Psoas muscle (tissue), 8 donors: ENCODE measurements at regions of chr1 and their contacts with region 1.

Region 1: DNA sequence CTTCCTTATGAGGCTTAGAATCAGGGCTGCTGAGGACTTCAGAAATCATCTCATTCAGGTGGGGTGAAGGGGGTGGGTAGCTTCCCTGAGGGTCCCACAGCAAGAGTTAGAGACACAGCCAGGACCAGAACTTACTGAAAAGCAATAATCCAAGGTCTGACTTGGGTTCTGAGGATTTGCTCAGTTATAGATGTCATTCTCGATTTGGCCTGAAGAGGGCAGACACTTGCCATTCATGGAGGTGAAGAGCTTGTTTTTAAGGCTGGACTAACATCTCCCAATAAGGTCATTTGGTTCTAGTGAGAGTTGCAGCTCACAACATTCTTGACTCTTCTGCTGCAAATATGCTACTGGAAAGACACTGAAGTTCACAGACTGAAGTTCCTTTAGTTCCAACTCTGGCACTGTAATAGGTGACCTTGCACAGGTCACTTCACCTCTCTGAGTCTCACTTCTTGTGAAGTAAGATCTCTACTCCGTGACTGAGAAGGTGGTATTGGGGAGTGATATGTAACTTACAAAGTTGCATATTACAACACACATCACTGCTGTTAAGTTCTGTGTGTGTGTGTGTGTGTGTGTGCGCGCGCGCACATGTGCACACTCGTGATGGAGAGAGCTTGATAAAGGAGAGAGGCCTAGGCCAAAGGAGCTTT is 69.8 kb upstream of the DIRAS3 start:
- DNase-seq: no peak
- ATAC-seq: peak; percentile 69 to 87 (median 79)
- H3K4me3 ChIP-seq: no peak overlapping the region
- H3K27ac ChIP-seq: no peak overlapping the region
- H3K4me1 ChIP-seq: peaks cover 3% of the 10 kb centered on the region
- H3K27me3 ChIP-seq: no peaks in the 10 kb centered on the region
- CTCF ChIP-seq: peak; percentile 94

Region 2: DNA sequence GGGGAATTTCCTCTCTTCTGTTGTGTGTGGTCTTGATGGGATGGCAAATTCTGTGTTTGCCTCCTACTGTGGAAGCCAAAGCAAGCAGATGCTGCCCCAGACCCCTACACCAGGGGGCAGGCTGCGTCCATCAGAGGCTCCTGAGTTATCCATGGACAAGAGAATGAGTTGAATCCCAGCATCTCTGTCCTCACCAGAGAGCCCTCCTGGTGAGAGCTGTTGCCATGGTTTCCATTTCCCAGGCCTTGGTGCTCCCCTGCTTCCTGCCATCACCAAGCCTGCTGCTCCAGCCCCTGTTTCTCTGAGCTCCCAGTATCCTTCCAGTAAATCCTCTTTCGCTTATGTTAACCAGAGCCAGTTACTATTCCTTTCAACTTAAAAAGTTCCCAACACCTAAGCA is 266.6 kb before region 1 on chr1:
- intact Hi-C with region 1: loop called in 1 of 2 experiments (anchors 10 kb)
- DNase-seq: peak; percentile 27 to 50
- ATAC-seq: peak in 2 of 4 donors; percentile 31 to 48
- H3K4me3 ChIP-seq: no peak overlapping the region
- H3K27ac ChIP-seq: no peak overlapping the region
- H3K4me1 ChIP-seq: peaks cover 7% of the 10 kb centered on the region
- H3K27me3 ChIP-seq: peaks cover 0 to 1% (median 0%) of the 10 kb centered on the region in 3 donors
- CTCF ChIP-seq: peak; percentile 56

Region 3: DNA sequence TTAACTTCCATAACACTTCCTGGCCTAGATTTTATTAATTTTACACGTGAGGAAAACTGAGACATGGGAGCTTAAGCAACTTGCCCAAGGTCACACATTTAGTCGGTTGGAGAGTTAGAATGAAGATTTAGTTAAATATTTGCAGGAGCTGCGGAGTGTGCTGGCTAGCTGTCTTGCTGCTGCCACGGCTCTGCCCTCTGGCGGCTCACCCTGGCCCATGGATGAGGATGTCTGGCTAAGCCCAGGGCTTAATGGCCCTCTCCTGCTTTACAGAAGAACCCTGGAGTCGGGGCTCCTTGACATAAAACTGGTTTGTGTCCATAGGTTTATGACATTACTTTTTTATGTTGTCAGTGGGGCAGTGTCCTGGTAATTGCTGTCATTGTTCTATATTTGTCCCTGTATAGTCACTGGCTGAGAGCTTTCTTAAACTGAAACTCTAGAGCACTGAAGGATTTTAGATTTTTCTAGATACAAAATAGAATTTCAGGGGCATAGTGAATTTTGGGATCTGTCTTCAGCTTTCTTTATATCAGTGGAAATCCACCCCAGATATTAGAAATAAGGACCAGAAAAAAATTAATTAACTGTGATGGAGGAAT is 200.9 kb after region 1 on chr1:
- intact Hi-C with region 1: loop called (anchors 1 to 5 kb)
- DNase-seq: peak; percentile 44 to 72
- ATAC-seq: peak; percentile 76 to 96 (median 86)
- H3K4me3 ChIP-seq: no peak overlapping the region
- H3K27ac ChIP-seq: no peak overlapping the region
- H3K4me1 ChIP-seq: no peaks in the 10 kb centered on the region
- H3K27me3 ChIP-seq: no peaks in the 10 kb centered on the region
- CTCF ChIP-seq: peak; percentile 70

Region 4: GRCh38 chr1:68384321-68384813 is 264.1 kb after region 1 on chr1:
- intact Hi-C with region 1: loop called in 1 of 2 experiments (anchors 1 kb)
- DNase-seq: no peak
- ATAC-seq: peak; percentile 91 to 98 (median 98)
- H3K4me3 ChIP-seq: no peak overlapping the region
- H3K27ac ChIP-seq: peak overlapping the region; percentile 58
- H3K4me1 ChIP-seq: peaks cover 15% of the 10 kb centered on the region
- H3K27me3 ChIP-seq: no peaks in the 10 kb centered on the region
- CTCF ChIP-seq: peak; percentile 33

Region 5: GRCh38 chr1:69737527-69738185 is 1617.4 kb after region 1 on chr1:
- intact Hi-C with region 1: loop called (anchors 5 to 10 kb)
- DNase-seq: no peak
- ATAC-seq: peak in 3 of 4 donors; percentile 51 to 69 (median 66)
- H3K4me3 ChIP-seq: no peak overlapping the region
- H3K27ac ChIP-seq: no peak overlapping the region
- H3K4me1 ChIP-seq: no peaks in the 10 kb centered on the region
- H3K27me3 ChIP-seq: no peaks in the 10 kb centered on the region
- CTCF ChIP-seq: peak; percentile 63